ENCODE measurements at regions of chr4 and their contacts with region 1.

Region 1: DNA sequence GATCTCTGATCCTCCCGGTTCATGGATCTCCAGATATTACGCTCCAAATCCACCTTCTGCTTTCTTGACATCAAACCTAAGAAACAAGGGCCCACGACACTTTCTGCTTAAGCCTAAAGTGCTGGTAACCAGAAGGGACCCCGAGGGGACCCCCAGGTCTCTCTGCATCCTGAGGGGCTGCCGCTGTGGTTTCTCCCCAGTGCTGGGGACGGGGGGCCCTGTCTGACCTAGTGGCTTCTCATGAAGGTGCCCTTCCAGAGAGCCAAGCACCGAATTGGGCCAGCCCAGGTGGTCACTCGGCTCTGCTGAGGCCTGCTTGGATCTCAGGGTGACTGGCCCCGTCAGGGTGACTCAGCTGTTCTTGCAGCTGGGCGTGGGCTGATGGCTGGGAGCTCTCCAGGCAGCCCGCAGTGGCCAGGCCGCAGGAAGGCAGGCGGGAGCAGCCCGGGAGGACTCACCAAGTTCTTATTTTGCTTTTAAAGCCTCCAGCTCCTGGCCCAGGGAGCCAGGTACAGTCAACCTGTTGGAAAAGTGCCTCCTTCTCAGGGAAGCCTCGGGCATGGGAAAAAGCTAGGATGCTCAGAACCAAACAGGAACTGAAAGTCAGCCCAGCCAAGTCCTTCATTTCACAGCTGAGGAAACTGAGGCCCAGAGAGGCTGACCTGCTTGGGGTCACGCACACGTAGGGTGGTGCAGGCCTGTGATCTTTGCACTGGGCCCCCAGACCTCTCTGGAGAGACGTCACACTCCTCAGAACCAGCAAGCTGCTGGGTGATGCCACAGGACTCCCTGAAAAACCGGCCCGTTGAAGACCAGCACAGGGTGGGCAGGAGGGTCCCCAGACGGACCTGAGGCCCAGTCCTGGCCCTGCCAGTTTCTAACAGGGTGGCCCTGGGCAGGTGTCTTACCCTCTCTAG is 16.7 kb downstream of the BLOC1S4 start:
- DNase-seq: peak in 1 of 2 donors; percentile 76
- H3K4me3 ChIP-seq: peak overlapping the region in 1 of 3 donors; percentile 22
- H3K27ac ChIP-seq: peak overlapping the region; percentile 60 to 75
- H3K4me1 ChIP-seq: peaks cover 10 to 11% of the 10 kb centered on the region in 2 donors
- H3K27me3 ChIP-seq: no peaks in the 10 kb centered on the region
- CTCF ChIP-seq: no peak
- POLR2A ChIP-seq: no peak

Region 2: DNA sequence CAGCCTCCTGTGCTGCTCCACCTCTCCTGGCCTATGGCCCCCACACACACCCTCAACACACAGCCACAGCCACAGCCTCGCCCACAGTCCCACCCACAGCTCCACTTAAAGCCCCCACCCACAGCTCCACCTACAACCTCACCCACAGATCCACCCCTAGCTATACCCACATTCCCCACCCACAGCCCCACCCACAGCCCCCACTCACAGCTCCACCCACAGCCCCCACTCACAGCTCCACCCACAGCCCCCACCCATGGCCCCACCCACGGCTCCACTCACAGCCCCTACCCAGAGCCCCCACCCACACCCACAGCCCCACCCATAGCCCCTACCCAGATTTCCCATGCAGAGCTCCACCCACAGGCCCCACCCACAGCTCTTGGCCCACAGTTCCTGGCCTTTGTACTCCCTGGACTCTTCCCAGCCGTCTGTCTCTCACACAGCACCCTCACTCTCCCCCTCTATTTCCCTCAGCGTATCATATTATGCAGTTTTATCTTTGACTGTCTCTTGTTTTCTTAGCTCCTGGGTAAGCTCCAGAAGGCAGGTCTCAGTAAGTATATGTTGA is 1346.9 kb before region 1 on chr4:
- intact Hi-C with region 1: no loop called
- DNase-seq: no peak
- H3K4me3 ChIP-seq: no peak overlapping the region
- H3K27ac ChIP-seq: no peak overlapping the region
- H3K4me1 ChIP-seq: no peaks in the 10 kb centered on the region
- H3K27me3 ChIP-seq: no peaks in the 10 kb centered on the region
- CTCF ChIP-seq: no peak
- POLR2A ChIP-seq: no peak

Region 3: GRCh38 chr4:6783053-6783981 is 50.6 kb after region 1 on chr4:
- intact Hi-C with region 1: loop called (anchors 2 kb)
- DNase-seq: peak; percentile 85 to 91
- H3K4me3 ChIP-seq: peak overlapping the region; percentile 99 to 100 (median 100)
- H3K27ac ChIP-seq: peak overlapping the region; percentile 99 to 100
- H3K4me1 ChIP-seq: peaks cover 0 to 9% of the 10 kb centered on the region in 2 donors
- H3K27me3 ChIP-seq: no peaks in the 10 kb centered on the region
- CTCF ChIP-seq: no peak
- POLR2A ChIP-seq: no peak